GM23248 (cell line): ENCODE measurements at regions of chr11 and their contacts with region 1.

Region 1: GRCh38 chr11:19539861-19540260 is 172.8 kb upstream of the NAV2 start:
- DNase-seq: no peak
- H3K4me3 ChIP-seq: no peak overlapping the region
- H3K27ac ChIP-seq: no peak overlapping the region
- H3K4me1 ChIP-seq: no peaks in the 10 kb centered on the region
- H3K27me3 ChIP-seq: no peaks in the 10 kb centered on the region

Region 2: DNA sequence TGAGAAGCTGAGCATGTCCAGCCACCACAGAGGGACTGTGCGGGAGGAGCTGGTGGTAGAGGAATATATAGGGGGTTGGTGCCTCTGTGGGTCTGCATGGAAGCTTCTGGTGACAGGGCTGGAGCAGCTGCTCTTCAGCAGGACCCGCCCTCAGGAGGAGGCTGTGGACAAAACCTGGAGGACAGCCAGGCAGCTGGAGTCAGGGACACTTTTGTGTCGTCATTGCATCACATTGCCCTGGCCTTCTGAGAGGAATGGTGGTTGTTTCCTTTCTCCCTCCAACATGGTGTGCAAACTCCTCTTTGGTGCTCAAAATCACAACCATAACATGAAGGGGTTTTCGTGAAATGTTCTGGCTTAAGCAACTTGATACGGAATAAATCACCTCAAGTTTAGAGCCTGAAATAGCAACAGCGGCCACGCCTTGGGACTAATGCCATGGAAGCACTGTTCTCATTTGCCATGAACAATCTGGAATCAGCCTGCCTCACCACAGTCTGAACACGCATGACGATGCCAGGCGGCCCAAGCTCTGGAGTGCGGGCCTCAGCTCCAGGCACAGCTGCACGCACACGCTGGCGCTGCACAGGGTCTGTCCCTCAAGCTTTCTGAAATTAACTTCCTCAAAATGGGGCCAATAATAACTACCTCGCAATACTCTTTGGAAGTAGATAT is 320.9 kb before region 1 on chr11:
- in situ Hi-C with region 1: no loop called
- DNase-seq: no peak
- H3K4me3 ChIP-seq: no peak overlapping the region
- H3K27ac ChIP-seq: no peak overlapping the region
- H3K4me1 ChIP-seq: no peaks in the 10 kb centered on the region
- H3K27me3 ChIP-seq: peaks cover 29% of the 10 kb centered on the region

Region 3: GRCh38 chr11:19323502-19323901 is 216.4 kb before region 1 on chr11:
- in situ Hi-C with region 1: loop called (anchors 5 kb)
- DNase-seq: no peak
- H3K4me3 ChIP-seq: no peak overlapping the region
- H3K27ac ChIP-seq: no peak overlapping the region
- H3K4me1 ChIP-seq: no peaks in the 10 kb centered on the region
- H3K27me3 ChIP-seq: peaks cover 11% of the 10 kb centered on the region

Region 4: GRCh38 chr11:19756675-19757475 is 217.0 kb after region 1 on chr11:
- in situ Hi-C with region 1: no loop called
- DNase-seq: peak; percentile 86
- H3K4me3 ChIP-seq: peak overlapping the region; percentile 53
- H3K27ac ChIP-seq: peak overlapping the region; percentile 77
- H3K4me1 ChIP-seq: peaks cover 34% of the 10 kb centered on the region
- H3K27me3 ChIP-seq: no peaks in the 10 kb centered on the region